Activated naive CD4-positive, alpha-beta T cell treated with anti-CD3 and anti-CD28 coated beads for 36 hours (primary cell): ENCODE measurements at regions of chr3 and their contacts with region 1.

Region 1: GRCh38 chr3:167350245-167350862 is 29.7 kb downstream of the ZBBX start:
- DNase-seq: no peak
- H3K4me3 Mint-ChIP-seq: no peak overlapping the region
- H3K27ac Mint-ChIP-seq: no peak overlapping the region
- H3K4me1 Mint-ChIP-seq: no peaks in the 10 kb centered on the region
- H3K27me3 Mint-ChIP-seq: peaks cover 3% of the 10 kb centered on the region

Region 2: GRCh38 chr3:165854696-165855095 is 1495.7 kb before region 1 on chr3:
- CTCF ChIA-PET with region 1: no interaction called
- intact Hi-C with region 1: loop called (anchors 5 kb)
- DNase-seq: no peak
- H3K4me3 Mint-ChIP-seq: no peak overlapping the region
- H3K27ac Mint-ChIP-seq: no peak overlapping the region
- H3K4me1 Mint-ChIP-seq: no peaks in the 10 kb centered on the region
- H3K27me3 Mint-ChIP-seq: no peaks in the 10 kb centered on the region

Region 3: GRCh38 chr3:166013073-166013679 is 1337.2 kb before region 1 on chr3:
- CTCF ChIA-PET with region 1: no interaction called
- intact Hi-C with region 1: loop called (anchors 10 kb)
- DNase-seq: no peak
- H3K4me3 Mint-ChIP-seq: no peak overlapping the region
- H3K27ac Mint-ChIP-seq: no peak overlapping the region
- H3K4me1 Mint-ChIP-seq: no peaks in the 10 kb centered on the region
- H3K27me3 Mint-ChIP-seq: no peaks in the 10 kb centered on the region

Region 4: GRCh38 chr3:167330993-167331785 is 19.2 kb before region 1 on chr3:
- CTCF ChIA-PET with region 1: no interaction called
- intact Hi-C with region 1: no loop called
- DNase-seq: no peak
- H3K4me3 Mint-ChIP-seq: no peak overlapping the region
- H3K27ac Mint-ChIP-seq: no peak overlapping the region
- H3K4me1 Mint-ChIP-seq: no peaks in the 10 kb centered on the region
- H3K27me3 Mint-ChIP-seq: peaks cover 2% of the 10 kb centered on the region

Region 5: GRCh38 chr3:167587651-167588050 is 237.3 kb after region 1 on chr3:
- CTCF ChIA-PET with region 1: no interaction called
- intact Hi-C with region 1: no loop called
- DNase-seq: no peak
- H3K4me3 Mint-ChIP-seq: no peak overlapping the region
- H3K27ac Mint-ChIP-seq: no peak overlapping the region
- H3K4me1 Mint-ChIP-seq: no peaks in the 10 kb centered on the region
- H3K27me3 Mint-ChIP-seq: peaks cover 2% of the 10 kb centered on the region

Region 6: DNA sequence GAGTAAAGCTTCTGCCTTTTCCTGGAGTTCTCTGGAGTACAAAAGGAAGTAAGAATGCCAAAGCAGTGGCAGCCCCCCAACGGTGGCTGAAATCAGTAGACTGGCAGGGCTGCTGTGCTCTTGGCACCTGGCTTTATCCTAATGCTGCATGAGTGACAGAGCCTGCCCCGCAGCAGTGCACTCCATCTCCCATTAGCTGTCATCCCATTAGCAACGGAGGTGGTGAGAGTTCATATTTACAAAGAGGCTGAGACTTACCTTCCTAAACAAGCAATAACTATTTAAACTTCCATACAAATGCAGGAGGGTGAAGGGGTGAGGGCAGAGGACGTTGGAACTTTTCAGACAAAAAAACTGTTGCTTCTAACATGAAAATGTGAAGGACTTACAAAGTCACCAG is 437.1 kb after region 1 on chr3:
- CTCF ChIA-PET with region 1: no interaction called
- intact Hi-C with region 1: no loop called
- DNase-seq: no peak
- H3K4me3 Mint-ChIP-seq: no peak overlapping the region
- H3K27ac Mint-ChIP-seq: no peak overlapping the region
- H3K4me1 Mint-ChIP-seq: no peaks in the 10 kb centered on the region
- H3K27me3 Mint-ChIP-seq: no peaks in the 10 kb centered on the region